ENCODE measurements at regions of chrX and their contacts with region 1.

Region 1: DNA sequence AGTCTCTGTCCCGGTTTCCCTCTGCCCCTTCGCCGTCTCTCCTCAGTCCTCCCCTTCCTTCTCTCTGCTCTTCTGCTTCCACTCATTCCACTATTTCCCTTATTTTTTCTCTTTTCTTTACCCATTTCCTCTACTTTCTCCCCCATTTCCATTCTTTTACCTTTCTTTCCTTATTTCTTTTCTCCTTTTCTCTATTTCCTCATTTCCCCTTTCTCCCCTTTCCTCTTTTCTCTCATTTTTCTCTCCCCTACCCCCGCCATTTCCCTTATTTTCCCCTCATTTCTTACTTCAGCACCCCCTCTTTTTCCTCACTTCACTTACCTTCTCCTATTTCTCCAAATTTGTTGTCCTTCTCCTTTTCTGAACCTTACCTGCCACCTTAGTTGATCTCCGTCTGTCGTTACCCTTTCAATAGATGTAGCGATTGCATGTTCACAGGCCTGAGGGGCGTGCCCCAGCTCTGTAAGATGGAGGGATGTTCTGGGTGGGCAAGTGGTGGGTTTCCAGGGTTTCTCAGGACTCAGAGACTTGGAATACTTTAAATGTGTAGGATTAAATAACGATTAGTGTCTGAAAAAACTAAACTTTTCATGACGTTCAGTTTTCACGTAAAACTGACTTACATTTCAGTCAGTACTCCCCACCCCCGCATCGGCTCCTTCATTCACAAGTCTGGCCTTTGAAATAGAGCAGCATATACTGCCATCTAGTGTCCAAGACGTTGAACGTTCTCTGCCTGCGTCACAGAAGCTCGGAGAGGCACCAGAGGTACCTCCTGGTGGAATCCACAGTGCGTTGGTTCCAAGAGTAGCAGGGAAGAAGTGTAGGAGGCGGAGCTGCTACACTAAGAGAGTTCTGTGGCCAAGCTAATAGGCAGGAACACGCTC is 641 bp upstream of the NCBP2L start:
- DNase-seq: peak; percentile 82
- ATAC-seq: peak; percentile 81
- H3K4me3 Mint-ChIP-seq: peak overlapping the region; percentile 79
- H3K27ac Mint-ChIP-seq: peak overlapping the region; percentile 44
- H3K4me1 Mint-ChIP-seq: peaks cover 9% of the 10 kb centered on the region
- H3K27me3 Mint-ChIP-seq: peaks cover 4% of the 10 kb centered on the region

Region 2: GRCh38 chrX:107627838-107628661 is 148.8 kb before region 1 on chrX and contains the start of gene PRPS1:
- CTCF ChIA-PET with region 1: interaction called, 31 read pairs
- POLR2A ChIA-PET with region 1: interaction called, 4 read pairs
- DNase-seq: peak; percentile 94
- ATAC-seq: peak; percentile 98
- H3K4me3 Mint-ChIP-seq: peak within 1 kb of the TSS; percentile 86
- H3K27ac Mint-ChIP-seq: peak within 1 kb of the TSS; percentile 96
- H3K4me1 Mint-ChIP-seq: peaks cover 26% of the 10 kb centered on the region
- H3K27me3 Mint-ChIP-seq: no peaks in the 10 kb centered on the region
- total RNA-seq, gene PRPS1: 69.8 to 71.3 TPM

Region 3: DNA sequence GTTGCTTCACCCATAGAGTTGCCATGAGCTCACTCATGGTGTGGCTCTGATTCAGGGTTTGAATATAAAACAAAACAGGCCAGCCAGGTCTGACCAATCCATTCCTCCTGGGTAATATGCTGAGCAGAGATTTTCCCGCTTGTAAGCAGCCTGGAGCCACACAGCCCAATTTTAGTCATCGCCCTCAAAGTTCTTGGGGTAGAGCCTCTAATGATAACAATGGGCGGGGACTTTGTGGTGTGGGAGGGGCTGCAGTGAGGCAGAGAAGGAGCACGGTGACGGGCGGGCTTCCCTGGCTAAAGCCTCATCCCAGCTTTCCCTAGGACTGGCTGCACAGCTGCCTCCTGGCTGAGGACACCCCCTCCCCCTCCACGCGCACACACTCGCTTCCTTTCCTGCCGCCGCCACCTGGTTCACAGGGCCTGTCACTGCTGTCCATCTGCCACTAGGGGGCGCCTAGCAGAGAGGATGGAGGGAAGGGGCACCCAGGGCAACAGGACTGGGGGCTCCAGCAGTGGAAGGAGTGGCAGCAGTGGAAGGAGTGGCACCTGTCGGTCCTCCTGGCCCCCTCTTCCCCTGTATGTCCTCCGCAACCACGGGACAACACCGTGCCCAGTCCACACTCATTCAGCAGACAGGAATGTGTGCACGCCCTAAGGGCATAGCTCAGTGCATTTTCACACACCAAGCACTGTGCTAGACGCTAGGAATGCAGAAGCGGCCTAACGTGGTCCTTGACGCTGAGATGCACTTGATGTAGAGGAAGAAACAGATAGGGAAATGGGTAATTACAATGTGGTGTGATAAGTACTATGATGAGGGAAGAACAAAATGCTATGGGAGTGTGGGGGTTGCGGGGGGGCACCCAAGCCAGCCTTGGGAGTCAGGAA is 121.8 kb before region 1 on chrX:
- CTCF ChIA-PET with region 1: interaction called, 147 read pairs
- POLR2A ChIA-PET with region 1: no interaction called
- DNase-seq: peak; percentile 73
- ATAC-seq: peak; percentile 70
- H3K4me3 Mint-ChIP-seq: no peak overlapping the region
- H3K27ac Mint-ChIP-seq: peak overlapping the region; percentile 30
- H3K4me1 Mint-ChIP-seq: peaks cover 10% of the 10 kb centered on the region
- H3K27me3 Mint-ChIP-seq: no peaks in the 10 kb centered on the region

Region 4: GRCh38 chrX:107672955-107673378 is 103.9 kb before region 1 on chrX:
- CTCF ChIA-PET with region 1: interaction called, 71 read pairs
- POLR2A ChIA-PET with region 1: interaction called, 4 read pairs
- DNase-seq: peak; percentile 83
- ATAC-seq: peak; percentile 39
- H3K4me3 Mint-ChIP-seq: peak overlapping the region; percentile 56
- H3K27ac Mint-ChIP-seq: peak overlapping the region; percentile 89
- H3K4me1 Mint-ChIP-seq: peaks cover 44% of the 10 kb centered on the region
- H3K27me3 Mint-ChIP-seq: no peaks in the 10 kb centered on the region

Region 5: DNA sequence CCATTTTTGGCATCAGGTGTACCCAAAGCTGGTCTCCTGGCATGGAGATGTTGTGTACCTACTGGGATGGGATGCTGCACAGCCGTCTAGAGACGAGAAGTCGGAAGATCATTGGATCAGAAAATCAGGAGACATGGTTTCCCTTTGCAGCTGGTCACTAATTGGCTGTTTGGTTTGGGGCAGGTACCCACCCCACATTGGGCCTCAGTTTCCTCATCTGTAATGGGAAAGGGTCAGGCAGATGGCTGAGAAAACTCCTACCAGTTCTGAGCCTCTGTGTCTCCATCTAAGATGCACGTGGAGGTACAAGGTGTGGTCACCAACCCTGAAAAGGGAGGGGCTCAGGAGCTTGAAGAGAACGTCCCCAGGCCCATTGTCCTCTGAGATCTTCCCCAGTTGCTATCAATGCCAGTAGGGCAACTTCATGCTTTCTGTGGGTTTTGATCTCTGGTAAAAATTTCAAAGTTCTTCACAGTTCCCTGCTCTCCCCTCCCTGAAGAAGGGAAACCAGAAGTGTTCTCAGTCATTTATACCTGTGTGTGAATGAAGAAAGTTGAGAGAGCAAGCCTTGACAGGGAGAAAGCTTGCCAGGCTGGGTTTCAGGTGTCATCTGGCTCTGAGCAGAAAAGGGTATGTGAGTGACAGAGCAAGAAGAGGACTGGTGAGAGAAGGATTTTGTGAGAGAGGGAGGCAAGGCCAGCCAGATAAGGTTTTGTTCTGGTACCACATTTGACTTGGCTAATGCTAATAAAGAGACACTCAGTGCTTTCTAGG is 16.4 kb before region 1 on chrX:
- CTCF ChIA-PET with region 1: interaction called, 11 read pairs
- POLR2A ChIA-PET with region 1: no interaction called
- DNase-seq: no peak
- ATAC-seq: no peak
- H3K4me3 Mint-ChIP-seq: no peak overlapping the region
- H3K27ac Mint-ChIP-seq: no peak overlapping the region
- H3K4me1 Mint-ChIP-seq: peaks cover 6% of the 10 kb centered on the region
- H3K27me3 Mint-ChIP-seq: no peaks in the 10 kb centered on the region

Region 6: DNA sequence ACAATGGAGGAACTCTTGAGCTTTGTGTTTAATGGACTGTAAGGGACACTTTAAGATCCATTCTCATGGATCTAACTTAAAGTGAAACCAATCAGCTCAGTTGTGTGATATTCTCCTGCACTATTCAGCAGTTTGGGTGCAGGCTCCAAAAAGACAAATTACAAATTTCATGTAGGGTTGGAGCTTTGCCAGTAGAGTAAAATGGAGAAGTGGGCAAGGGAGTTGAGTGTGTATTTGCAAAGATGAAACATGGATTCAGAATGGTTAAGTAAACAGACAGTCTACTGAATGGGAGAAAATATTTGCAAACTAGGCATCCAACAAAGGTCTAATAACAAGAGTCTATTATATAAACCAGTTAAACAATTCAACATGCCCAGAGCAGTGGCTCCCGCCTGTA is 27.5 kb after region 1 on chrX:
- CTCF ChIA-PET with region 1: no interaction called
- POLR2A ChIA-PET with region 1: no interaction called
- DNase-seq: no peak
- ATAC-seq: no peak
- H3K4me3 Mint-ChIP-seq: no peak overlapping the region
- H3K27ac Mint-ChIP-seq: no peak overlapping the region
- H3K4me1 Mint-ChIP-seq: no peaks in the 10 kb centered on the region
- H3K27me3 Mint-ChIP-seq: peaks cover 7% of the 10 kb centered on the region

Measured in activated CD8-positive, alpha-beta T cell treated with anti-CD3 and anti-CD28 coated beads, Interleukin-2, amount 10 ng/mL, durations not matched to agents 7 days and 5 days (primary cell).